ENCODE measurements at regions of chr10 and their contacts with region 1.

Region 1: DNA sequence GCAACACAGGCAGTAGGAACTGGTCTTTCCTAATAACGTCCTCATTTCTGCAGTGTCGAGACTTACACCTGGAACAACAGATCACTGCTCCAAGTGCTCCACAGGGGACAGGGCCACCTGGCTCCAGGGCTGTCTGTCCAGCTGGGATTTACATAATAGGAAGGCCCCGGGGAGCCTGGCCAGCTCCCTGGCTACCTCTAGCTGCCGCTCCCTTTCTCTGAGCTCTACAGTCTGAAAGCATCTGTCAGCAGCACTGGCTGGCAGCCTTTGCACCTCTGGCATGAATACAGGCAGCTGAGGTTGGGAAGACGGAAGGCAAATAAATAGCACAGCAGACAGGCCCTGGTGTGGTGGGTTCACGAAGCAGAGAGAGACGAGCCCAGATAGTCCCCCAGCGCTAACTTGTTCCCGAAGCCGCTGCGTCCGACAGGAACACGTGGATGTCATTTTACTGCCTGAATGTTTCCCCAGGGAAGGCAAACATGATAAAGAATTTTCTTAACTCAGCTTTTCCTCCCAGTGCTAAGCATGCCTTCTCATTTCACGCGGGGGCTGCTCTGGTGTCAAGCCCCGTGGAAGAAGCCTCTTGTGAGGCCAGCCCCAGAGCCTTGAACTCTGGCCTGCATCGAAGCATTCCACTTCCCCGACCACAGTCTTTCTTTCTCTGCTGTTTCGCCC is 105.4 kb downstream of the ITIH5 start:
- DNase-seq: peak; percentile 49
- ATAC-seq: peak; percentile 95
- H3K4me3 ChIP-seq: peak overlapping the region; percentile 7 to 56 (median 15)
- H3K27ac ChIP-seq: no peak overlapping the region
- H3K4me1 ChIP-seq: peaks cover 27% of the 10 kb centered on the region
- H3K27me3 ChIP-seq: no peaks in the 10 kb centered on the region
- CTCF ChIP-seq: peak; percentile 46
- EP300 ChIP-seq: no peak
- POLR2A ChIP-seq: no peak
- RAD21 ChIP-seq: no peak

Region 2: DNA sequence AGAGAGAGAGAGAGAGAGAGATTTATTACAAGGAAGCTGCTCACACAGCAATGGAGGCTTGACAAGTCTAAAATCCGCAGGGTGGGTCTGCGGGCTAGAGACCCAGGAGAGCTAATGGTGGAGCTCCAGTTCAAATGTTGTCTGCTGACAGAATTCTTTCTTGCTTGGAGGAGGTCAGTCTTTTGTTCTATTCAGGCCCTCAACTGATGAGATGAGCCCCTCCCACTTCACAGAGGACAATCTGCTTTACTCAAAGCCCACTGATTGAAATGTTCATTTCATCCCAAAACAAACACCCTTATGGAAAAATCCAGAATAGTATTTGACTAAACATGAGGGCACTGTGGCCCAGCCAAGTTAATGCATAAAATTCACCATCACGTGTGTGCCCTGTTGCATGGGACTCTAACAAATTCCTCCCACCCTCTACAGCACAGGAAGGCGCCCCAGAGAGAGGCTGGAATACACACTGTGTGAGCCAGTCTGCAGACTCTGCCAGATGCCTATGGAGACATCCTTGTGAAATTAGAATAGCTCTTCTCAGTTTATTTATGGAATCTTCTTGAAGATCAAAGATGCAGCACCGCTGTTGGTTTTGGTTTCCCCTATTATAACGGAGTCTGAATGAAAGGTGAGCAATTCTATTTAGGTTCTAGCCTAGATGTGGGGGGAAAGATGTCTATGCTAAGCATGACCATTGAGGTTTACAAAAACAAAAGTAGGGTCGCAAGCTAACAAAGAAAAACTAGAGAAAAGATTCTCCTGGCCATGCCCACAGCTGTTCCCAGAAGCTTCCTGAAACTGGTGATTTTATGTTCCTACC is 27.5 kb before region 1 on chr10:
- CTCF ChIA-PET with region 1: no interaction called
- POLR2A ChIA-PET with region 1: interaction called, 14 read pairs
- in situ Hi-C with region 1: no loop called
- intact Hi-C with region 1: loop called (anchors 2 kb)
- DNase-seq: no peak
- ATAC-seq: no peak; the same call in 2 of the 3 replicates
- H3K4me3 ChIP-seq: peak overlapping the region in 1 of 3 experiments; percentile 60; a peak in 1 of 6 replicates
- H3K27ac ChIP-seq: peak overlapping the region; percentile 63
- H3K4me1 ChIP-seq: peaks cover 20% of the 10 kb centered on the region
- H3K27me3 ChIP-seq: no peaks in the 10 kb centered on the region
- CTCF ChIP-seq: no peak
- EP300 ChIP-seq: no peak
- POLR2A ChIP-seq: no peak
- RAD21 ChIP-seq: no peak